Prostate gland (tissue), 2 donors: ENCODE measurements at regions of chr20 and their contacts with region 1.

Region 1: DNA sequence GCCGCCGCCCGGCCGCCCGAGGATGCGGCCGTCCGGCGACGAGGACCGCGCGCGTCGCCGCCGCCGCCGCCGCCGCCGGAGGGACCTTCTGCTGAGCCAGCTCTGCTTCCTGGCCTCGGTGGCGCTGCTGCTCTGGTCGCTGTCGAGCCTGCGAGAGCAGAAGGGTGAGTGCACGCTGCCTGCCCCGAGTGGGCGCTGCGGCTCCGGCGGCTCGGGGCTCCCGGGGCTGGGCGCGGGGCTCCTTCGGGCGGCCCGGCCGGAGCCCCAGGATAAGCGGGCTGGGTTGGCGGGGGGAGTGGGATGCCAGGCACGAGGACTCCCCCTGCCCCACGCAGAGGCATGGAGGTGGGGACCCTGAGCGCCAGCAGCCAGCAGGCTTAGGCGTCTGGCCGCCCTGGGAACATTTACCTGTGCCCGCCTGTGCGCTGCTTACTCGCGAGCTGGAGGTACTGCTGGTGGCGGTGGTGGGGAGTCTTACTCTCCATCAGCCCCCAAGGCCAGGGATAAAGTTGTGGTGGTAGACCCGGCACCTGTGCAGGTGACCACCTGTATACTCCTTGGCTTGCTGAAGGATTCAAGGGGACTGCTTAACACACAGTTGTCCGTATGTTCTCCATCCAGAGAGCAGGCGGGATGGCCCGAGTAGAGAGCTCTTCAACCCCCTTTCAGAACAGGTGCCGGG is 520 bp downstream of the SLC24A3 start:
- DNase-seq: peak; percentile 74
- H3K4me3 ChIP-seq: peak overlapping the region; percentile 44 to 45
- H3K27ac ChIP-seq: peak overlapping the region; percentile 62 to 64
- H3K4me1 ChIP-seq: no peaks in the 10 kb centered on the region
- H3K27me3 ChIP-seq: no peaks in the 10 kb centered on the region
- CTCF ChIP-seq: peak in 3 of 4 experiments; percentile 22 to 63 (median 61)
- POLR2A ChIP-seq: no peak

Region 2: DNA sequence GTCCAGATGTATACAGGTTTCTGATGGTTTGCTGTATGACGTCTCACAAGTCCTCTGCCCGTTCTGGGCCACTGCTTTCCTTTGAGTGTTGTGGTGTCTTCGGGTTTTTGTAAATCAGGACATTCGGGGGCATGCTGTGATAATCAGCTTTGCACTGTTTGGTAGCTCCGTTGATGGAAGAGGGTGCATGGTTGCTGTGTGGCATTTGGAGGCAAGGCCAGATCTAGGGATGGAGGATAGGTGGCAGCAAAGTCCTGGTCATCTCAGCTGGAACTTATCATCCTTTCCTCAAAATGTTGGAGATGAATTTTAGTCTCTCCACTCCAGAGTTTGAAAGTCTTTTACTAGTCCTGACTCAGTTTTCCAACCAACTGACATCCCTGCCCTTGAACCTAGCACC is 308.3 kb before region 1 on chr20:
- intact Hi-C with region 1: loop called (anchors 5 kb)
- DNase-seq: no peak
- H3K4me3 ChIP-seq: no peak overlapping the region
- H3K27ac ChIP-seq: no peak overlapping the region
- H3K4me1 ChIP-seq: no peaks in the 10 kb centered on the region
- H3K27me3 ChIP-seq: no peaks in the 10 kb centered on the region
- CTCF ChIP-seq: peak in 2 of 4 experiments; percentile 23 to 32
- POLR2A ChIP-seq: no peak

Region 3: DNA sequence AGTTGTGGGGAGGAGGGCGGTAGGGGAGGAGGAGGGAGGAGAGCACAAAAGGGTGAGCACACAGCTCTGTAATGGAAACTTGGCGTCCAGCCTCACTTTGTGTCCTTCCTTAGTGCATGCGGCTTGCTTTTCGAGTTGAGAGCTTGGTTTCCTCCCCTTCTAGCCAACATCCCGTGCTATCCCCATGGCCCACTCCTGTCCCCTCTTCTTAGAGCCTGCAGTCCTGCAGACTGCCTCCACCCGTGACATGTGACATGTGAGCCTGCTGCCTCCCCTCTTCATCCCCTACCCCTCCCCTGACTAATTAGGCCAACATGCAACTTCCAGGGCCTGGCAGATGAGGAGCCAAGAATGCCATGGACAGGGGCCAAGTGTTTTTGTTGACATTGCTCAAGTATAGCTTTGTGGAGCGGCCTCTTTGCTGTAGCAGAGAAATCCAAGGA is 62.7 kb after region 1 on chr20:
- intact Hi-C with region 1: loop called (anchors 10 kb)
- DNase-seq: peak; percentile 34
- H3K4me3 ChIP-seq: no peak overlapping the region
- H3K27ac ChIP-seq: no peak overlapping the region
- H3K4me1 ChIP-seq: no peaks in the 10 kb centered on the region
- H3K27me3 ChIP-seq: no peaks in the 10 kb centered on the region
- CTCF ChIP-seq: no peak
- POLR2A ChIP-seq: no peak

Region 4: DNA sequence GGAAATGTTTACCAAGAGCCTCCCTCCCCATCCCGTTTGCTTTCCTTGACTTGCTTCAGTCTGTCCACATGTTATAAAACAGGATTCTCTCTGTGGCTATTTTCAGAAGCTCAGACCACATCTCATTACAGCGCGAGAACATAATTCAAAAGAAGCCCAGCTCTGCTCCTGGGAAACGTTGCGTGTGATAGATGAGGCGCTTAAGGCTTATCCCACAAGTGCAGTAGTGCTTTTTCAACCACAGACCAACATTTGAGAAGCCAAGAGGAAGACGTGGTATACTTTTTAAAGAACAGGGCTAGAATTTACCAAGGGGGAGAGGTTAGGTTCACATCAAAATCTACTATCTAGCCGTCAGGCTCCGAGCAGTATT is 238.9 kb after region 1 on chr20:
- intact Hi-C with region 1: loop called (anchors 10 kb)
- DNase-seq: no peak
- H3K4me3 ChIP-seq: no peak overlapping the region
- H3K27ac ChIP-seq: no peak overlapping the region
- H3K4me1 ChIP-seq: no peaks in the 10 kb centered on the region
- H3K27me3 ChIP-seq: no peaks in the 10 kb centered on the region
- CTCF ChIP-seq: no peak
- POLR2A ChIP-seq: no peak